Activated CD4-positive, alpha-beta T cell treated with anti-CD3 and anti-CD28 coated beads for 36 hours (primary cell): ENCODE measurements at regions of chr2 and their contacts with region 1.

Region 1: GRCh38 chr2:135600915-135601314 is 69.6 kb downstream of the R3HDM1 start:
- DNase-seq: no peak
- ATAC-seq: no peak
- H3K4me3 Mint-ChIP-seq: no peak overlapping the region
- H3K27ac Mint-ChIP-seq: no peak overlapping the region
- H3K4me1 Mint-ChIP-seq: no peaks in the 10 kb centered on the region
- H3K27me3 Mint-ChIP-seq: no peaks in the 10 kb centered on the region

Region 2: GRCh38 chr2:135473567-135473966 is 127.3 kb before region 1 on chr2:
- CTCF ChIA-PET with region 1: interaction called, 4 read pairs
- POLR2A ChIA-PET with region 1: no interaction called
- intact Hi-C with region 1: loop called in 1 of 2 experiments (anchors 2 kb)
- DNase-seq: peak; percentile 50
- ATAC-seq: peak; percentile 42
- H3K4me3 Mint-ChIP-seq: no peak overlapping the region
- H3K27ac Mint-ChIP-seq: no peak overlapping the region
- H3K4me1 Mint-ChIP-seq: peaks cover 2% of the 10 kb centered on the region
- H3K27me3 Mint-ChIP-seq: no peaks in the 10 kb centered on the region

Region 3: DNA sequence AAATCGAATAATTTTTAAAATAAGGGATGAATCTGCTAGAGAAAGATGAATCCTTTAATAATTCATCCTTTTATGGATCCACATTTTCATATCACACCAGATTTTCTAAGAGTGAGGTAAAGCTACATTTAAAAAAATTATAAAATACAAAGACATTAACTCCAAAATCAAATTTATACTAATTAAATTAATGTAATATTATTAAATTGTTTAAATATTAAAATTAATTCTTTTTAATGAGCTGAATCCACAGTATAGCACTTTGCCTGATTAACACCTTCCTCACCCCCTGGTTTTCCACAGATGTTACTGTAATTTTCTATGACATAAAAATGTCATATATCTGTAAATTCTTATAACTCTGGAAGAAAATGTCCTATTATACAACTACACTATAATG is 96.1 kb before region 1 on chr2:
- CTCF ChIA-PET with region 1: no interaction called
- POLR2A ChIA-PET with region 1: no interaction called
- intact Hi-C with region 1: no loop called
- DNase-seq: no peak
- ATAC-seq: no peak
- H3K4me3 Mint-ChIP-seq: no peak overlapping the region
- H3K27ac Mint-ChIP-seq: no peak overlapping the region
- H3K4me1 Mint-ChIP-seq: no peaks in the 10 kb centered on the region
- H3K27me3 Mint-ChIP-seq: no peaks in the 10 kb centered on the region